Endothelial cell of umbilical vein (primary cell): ENCODE measurements at regions of chr5 and their contacts with region 1.

Region 1: DNA sequence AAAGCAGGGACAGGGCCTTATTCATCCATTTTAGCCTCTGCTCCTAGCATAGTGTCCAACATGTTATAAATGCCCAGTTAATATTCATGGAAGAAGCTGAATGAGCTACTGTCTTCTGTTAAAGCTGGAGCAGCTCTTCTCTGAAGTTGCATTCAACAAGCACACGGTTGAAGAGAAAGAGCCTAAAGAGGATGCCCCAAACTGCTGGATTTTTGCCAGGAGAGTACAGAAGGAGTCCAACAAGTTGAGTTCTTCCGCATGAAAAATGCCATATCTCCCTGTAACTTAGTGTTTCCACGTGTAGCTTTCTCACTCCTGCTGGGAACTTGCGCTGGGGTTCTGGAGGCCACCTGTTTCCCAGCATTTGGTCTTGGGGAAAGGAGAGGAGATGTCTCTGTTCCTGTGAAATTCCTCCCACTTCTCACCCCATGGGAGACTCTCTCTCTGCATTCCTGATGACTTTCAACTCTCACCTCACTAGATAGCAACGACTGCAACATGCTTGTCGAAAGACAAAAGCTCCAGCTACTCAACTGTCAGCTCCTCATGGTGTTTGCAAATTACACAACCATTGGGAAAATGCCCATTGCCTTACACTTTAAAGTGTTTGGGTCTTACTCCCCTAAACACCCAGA is 122.8 kb downstream of the KIF4B start:
- DNase-seq: no peak
- H3K4me3 ChIP-seq: no peak overlapping the region
- H3K27ac ChIP-seq: no peak overlapping the region
- H3K4me1 ChIP-seq: no peaks in the 10 kb centered on the region
- H3K27me3 ChIP-seq: peaks cover 0 to 2% of the 10 kb centered on the region in 2 experiments
- CTCF ChIP-seq: no peak
- POLR2A ChIP-seq: no peak

Region 2: DNA sequence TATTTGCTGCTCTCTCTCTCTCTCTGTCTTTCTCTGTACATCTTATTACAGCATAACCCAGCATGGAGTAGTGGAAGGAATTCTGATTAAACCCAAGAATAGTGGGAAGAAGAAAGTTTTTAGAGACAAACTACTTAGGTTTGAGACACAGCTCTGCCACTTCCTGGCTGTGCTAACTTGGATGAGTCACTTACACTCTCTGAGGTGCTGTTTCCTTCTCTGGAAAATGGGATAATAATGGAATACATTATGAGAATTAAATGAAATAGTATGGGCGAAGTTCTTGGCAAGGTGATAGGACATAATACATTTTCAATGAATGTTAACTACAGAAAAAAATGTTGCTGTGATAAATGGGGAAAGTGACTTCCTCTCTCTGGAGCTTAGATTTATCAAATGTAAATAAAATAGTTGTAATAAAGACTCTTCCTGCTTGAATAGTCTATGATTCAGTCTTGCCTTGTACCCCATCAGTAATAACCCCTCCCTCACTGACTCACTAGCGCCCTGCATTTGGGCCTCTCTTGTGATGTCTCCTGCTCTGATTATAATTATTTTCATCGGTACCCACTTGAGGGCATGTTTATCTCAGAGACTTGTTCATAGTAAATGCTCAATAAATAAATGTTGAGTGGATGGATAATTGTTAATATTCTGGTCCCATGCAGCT is 95.2 kb before region 1 on chr5:
- CTCF ChIA-PET with region 1: no interaction called
- POLR2A ChIA-PET with region 1: no interaction called
- dilution Hi-C with region 1: no loop called
- intact Hi-C with region 1: no loop called
- DNase-seq: peak; percentile 33
- H3K4me3 ChIP-seq: no peak overlapping the region
- H3K27ac ChIP-seq: no peak overlapping the region
- H3K4me1 ChIP-seq: no peaks in the 10 kb centered on the region
- H3K27me3 ChIP-seq: no peaks in the 10 kb centered on the region
- CTCF ChIP-seq: no peak
- POLR2A ChIP-seq: no peak

Region 3: DNA sequence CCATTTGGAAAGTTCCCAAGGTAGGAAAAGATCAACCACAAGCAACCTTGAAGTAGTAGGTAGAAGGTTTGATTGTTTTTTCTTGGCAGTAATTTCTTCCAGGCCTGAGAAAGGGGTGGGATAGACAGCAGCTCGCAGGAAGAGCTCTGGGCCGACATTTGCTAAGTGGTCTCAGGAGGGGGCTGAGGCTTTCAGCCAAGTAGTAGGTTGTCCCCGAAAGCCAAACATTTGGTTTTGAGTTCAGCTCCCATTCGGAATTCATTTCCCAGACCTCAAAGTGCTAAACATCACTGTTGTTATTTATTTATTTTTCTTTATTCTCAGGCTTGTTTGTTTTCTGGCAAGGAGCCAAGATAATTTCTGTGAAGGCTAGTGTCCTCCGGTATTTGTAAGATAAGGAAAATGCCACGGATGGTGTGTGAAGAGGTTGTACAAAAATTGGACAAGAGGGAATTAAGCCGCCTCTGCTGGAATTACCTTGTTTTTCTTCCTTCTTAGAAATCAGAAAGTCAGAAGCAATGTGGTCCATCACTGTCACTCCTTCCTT is 10.7 kb before region 1 on chr5:
- CTCF ChIA-PET with region 1: interaction called, 11 read pairs
- POLR2A ChIA-PET with region 1: no interaction called
- dilution Hi-C with region 1: no loop called
- intact Hi-C with region 1: no loop called
- DNase-seq: no peak
- H3K4me3 ChIP-seq: no peak overlapping the region
- H3K27ac ChIP-seq: no peak overlapping the region
- H3K4me1 ChIP-seq: no peaks in the 10 kb centered on the region
- H3K27me3 ChIP-seq: peaks cover 0 to 2% of the 10 kb centered on the region in 2 experiments
- CTCF ChIP-seq: no peak
- POLR2A ChIP-seq: no peak

Region 4: DNA sequence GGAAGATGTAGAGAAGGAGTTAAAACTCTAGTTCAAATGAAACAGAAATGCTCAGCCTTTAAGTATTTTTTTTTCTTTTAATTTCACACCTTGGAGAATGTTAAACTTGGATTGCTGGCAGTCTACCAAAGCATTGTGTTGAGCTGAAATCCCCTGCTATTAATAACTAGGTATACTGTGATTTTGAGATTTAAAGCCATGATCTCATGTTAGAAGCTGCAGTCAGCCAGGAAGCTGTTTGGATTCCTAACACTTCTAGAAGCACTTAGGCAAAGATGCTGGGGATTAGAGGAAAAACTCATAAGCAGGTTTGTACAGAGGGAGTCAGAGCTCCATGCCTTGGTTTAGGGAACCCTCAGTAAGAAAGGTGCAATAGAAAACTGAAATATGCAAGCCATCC is 18.6 kb after region 1 on chr5:
- CTCF ChIA-PET with region 1: interaction called, 15 read pairs
- POLR2A ChIA-PET with region 1: no interaction called
- dilution Hi-C with region 1: no loop called
- intact Hi-C with region 1: no loop called
- DNase-seq: no peak
- H3K4me3 ChIP-seq: no peak overlapping the region
- H3K27ac ChIP-seq: no peak overlapping the region
- H3K4me1 ChIP-seq: no peaks in the 10 kb centered on the region
- H3K27me3 ChIP-seq: no peaks in the 10 kb centered on the region
- CTCF ChIP-seq: no peak
- POLR2A ChIP-seq: no peak